ENCODE measurements at regions of chr17 and their contacts with region 1.

Region 1: DNA sequence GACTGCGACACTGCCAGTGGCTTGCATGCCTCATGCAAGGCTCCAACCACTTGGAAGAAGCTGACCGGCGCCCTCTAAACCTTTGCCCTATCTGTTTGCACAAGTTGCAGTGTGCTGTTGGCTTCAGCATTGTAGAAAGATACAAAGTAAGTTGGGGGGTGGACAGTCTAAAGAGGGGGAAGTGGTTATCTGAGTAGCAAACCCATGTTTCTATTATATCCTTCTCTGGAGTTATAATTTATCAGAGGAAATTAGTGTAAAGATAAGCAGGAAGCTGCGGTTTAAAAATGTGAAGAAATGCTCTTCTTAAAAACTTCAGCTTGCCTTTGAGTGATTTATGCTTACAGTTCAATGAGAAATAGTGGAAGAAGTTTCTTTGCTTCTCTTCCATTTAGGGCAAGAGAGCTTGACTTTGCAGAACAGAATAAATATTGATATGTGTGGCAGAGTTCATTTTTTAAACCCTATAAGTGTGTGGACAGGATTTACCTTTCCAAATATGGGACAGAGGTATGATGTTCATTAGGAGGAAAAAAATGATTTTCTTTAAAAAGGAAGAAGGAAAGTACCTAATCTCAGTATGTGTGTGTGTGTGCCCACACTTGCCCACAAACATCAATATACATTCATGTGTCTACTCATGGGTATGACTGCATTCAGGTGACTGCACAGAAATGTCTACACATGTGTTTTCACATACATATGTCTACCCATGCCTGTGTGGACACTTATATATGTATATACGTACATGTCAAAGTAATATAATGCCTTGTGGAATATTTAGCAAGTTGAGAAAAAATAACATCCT is 8.1 kb downstream of the AMZ2 start:
- DNase-seq: no peak
- ATAC-seq: no peak
- H3K4me3 ChIP-seq: no peak overlapping the region
- H3K27ac ChIP-seq: no peak overlapping the region
- H3K4me1 ChIP-seq: no peaks in the 10 kb centered on the region
- H3K27me3 ChIP-seq: no peaks in the 10 kb centered on the region
- CTCF ChIP-seq: no peak
- POLR2A ChIP-seq: no peak
- RAD21 ChIP-seq: no peak

Region 2: DNA sequence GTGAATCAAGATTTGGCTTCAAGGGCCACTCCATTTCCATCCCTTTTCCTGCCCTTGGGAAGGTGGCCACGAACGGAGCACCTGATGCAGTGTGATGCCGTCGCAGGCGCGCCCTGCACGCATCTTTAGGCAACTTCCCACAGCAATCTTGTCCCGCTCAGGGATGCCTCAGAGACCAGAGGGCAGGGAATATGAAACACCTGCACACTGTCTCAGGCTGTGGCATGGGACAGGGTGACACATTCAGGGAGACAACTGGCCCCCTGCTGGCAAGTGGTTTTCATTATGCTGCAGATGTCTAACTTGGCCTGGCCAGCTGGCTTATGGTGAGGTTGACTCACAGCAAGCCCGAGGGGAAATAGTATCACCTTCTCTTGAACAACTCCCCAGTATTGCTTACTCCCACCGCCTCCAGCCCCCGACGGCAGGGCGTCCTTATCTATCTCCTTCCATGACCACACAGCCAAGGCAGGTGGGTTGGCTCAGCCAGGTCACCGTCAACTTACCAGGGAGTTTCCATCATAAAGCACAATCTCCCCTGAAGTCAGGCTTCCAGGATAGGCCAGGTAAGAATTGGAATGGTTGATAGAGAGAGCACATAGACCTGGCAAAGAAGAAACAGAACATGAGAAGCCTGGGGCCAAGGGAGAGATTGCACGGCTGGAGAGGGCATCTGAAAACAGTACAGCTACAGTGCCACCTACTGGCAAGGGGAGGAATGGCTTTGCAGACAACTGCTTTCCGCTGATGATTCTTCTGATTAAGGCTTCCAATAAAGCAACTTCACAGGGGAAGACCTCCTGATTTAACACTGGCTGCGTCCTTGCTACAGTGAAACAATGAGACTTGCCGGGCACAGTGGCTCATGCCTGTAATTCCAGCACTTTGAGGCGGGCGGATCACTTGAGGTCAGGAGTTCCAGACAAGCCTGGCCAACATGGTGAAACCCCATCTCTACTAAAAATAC is 180.2 kb after region 1 on chr17:
- CTCF ChIA-PET with region 1: no interaction called
- POLR2A ChIA-PET with region 1: no interaction called
- dilution Hi-C with region 1: no loop called
- in situ Hi-C with region 1: loop called (anchors 10 kb)
- intact Hi-C with region 1: no loop called
- DNase-seq: peak; percentile 81
- ATAC-seq: peak; percentile 78
- H3K4me3 ChIP-seq: no peak overlapping the region
- H3K27ac ChIP-seq: no peak overlapping the region
- H3K4me1 ChIP-seq: peaks cover 9% of the 10 kb centered on the region
- H3K27me3 ChIP-seq: no peaks in the 10 kb centered on the region
- CTCF ChIP-seq: peak; percentile 91
- POLR2A ChIP-seq: 0 out of 2 replicates have a peak, but pooled peaks have one; percentile 32
- RAD21 ChIP-seq: peak; percentile 85

Region 3: DNA sequence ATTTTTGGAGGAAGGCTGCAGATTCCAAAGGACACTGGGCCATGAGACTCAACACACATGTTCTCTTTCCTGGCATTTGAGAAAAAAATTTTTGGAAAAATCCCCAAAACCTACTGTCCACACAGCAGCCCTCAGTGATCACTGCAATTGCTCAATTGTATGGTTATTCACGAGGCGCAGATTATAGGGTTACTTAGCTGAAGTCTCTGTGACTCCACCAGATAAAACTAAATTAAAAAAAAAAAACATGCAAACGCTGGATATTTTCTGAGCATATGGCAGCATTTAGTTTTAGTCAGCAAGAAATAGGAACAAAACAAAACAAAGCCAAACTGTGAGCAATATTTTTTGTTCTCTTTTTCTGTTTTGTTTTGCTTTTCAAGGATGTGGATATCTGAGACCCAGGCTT is 429.0 kb after region 1 on chr17:
- CTCF ChIA-PET with region 1: no interaction called
- POLR2A ChIA-PET with region 1: no interaction called
- dilution Hi-C with region 1: no loop called
- in situ Hi-C with region 1: no loop called
- intact Hi-C with region 1: no loop called
- DNase-seq: no peak
- ATAC-seq: no peak
- H3K4me3 ChIP-seq: no peak overlapping the region
- H3K27ac ChIP-seq: no peak overlapping the region
- H3K4me1 ChIP-seq: no peaks in the 10 kb centered on the region
- H3K27me3 ChIP-seq: no peaks in the 10 kb centered on the region; the same call in 1 of the 2 replicates
- CTCF ChIP-seq: no peak
- POLR2A ChIP-seq: no peak
- RAD21 ChIP-seq: no peak

Measured in IMR-90 (cell line).